Caki2 (cell line): ENCODE measurements at regions of chr7 and their contacts with region 1.

Region 1: DNA sequence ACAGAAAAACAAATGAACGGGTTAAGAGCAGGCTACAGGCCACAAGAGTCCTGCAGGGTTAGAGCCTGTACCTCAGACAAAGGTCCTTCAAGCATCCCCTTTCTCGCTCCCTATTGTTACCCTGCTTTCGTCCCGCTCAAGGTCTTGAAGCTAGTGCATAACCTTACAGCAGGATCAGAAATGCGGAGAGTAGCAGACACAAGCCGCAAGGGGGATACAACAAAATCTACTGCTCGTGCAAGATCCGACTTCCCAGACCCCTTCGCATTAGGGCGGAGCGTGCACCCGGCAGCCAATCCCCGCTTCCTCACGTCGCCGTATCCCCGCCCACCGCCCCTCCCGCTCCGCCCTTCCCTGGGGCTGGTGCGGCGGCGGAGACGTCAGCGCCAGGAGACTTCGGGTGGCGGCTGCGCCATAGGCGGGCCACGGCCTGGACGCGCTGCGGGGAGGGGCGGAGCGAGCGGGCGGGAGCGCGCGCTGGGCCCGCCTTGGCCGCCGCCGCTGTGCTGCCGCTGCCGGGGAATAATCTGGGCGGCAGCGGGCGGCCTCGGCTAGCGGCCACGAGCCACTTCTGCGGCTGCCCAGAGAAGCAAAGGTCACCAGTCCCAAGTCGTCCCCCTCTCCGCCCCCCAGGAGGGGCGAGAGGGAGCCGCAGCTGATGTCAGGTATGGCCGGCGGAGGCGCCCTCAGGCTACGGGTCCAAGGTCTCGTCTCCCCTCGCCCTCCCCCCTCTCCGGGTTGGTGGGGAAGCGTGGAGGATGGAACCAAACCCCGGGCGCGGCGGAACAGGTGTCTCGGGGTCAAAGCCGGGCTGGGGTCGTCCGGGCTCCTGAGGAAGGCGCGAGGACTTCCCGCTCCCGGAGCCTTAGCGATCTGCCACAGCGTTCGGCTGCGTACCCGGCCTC is at the start of gene C1GALT1:
- DNase-seq: peak; percentile 95
- total RNA-seq, gene C1GALT1: 10.2 and 24.4 TPM in 2 replicates

Region 2: GRCh38 chr7:7416031-7416858 is 233.8 kb after region 1 on chr7:
- in situ Hi-C with region 1: loop called (anchors 5 kb)
- DNase-seq: peak; percentile 16

Region 3: DNA sequence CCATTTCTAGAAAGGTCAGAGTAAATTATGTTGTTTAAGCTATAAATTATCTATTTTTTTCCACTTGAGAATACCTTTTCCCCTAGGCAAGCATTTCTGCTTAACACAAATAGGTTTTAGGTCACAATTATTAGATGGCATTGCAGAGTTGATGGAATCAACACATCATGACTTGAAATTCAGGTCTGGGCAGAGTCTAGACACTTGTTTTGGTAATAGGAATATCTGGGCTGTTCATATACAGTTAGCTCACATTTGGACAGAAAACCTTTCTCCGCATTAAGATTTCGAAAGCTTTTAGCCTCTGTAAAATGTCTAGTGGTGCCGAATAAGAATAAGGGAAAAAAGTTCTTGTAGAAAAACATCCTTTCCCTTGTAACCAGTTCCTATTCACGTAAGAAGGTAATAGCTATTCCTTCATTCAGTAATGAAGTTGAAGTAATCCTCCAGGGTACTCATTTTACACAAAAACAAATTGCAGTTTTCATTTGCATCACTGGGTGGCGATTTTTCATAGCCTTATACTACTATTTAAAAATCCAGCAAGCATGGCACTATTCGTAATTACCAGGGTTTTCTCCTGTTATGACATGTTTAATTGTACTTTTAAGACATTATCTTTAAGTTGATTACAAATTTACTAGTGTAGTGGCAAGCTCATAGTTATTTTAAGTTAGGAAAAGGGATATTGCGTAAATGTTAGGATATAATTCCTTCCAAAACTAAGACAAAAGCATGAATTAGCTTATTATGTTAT is 498.9 kb after region 1 on chr7:
- in situ Hi-C with region 1: no loop called
- DNase-seq: peak; percentile 41